MCF 10A (cell line): ENCODE measurements at regions of chr6 and their contacts with region 1.

Region 1: GRCh38 chr6:7541175-7542064 is at the start of gene DSP:
- DNase-seq: peak; percentile 86
- H3K4me3 Mint-ChIP-seq: peak within 1 kb of the TSS; percentile 98
- H3K27ac Mint-ChIP-seq: peak within 1 kb of the TSS; percentile 97
- H3K4me1 Mint-ChIP-seq: peaks cover 13% of the 10 kb centered on the region
- H3K27me3 Mint-ChIP-seq: no peaks in the 10 kb centered on the region
- CTCF ChIP-seq: no peak
- total RNA-seq, gene DSP: 163 and 227 TPM in 2 replicates

Region 2: DNA sequence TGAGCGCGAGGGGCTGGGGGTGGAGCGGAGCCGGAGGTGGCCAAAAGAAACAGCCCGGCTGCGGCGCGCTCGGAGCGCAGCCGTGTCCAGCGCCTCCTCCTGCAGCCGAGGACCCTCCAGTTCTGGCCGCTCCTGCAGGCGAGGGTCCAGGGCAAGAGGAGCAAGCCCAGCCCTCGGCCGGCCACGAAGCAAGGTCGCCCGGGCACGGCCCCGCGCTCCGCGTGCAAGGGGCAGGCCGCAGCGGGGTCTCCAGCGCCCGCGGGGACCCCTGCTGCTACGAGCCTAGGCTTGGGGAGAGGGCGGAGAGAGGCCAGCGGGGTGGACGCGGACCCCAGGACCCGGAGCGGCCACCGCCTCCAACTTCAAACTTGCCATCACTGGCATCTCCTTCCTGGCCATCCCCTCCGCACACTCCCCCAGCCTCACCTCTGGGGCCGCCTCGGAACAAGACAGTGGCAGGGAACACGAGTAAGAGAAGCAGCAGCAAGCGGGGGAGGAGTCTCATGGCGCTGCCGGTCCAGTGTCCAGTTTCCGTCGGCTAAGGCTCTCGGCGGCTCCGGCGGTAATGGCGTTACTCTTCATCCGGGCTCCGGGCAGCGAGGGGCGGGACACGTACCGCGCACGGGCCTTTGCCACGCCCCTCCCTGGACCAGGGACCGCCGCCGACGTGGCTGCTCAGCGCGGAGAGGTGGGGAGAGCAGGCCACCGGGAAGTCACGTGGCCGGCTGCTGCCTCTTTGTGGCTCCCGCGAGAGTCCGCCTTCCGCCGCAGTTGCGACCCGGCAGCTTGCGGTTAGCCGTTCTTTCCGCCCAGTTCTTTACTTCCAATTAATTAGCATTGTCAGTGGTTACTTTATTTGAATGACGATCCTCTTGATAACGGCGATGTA is 228.6 kb before region 1 on chr6 and contains the start of gene SSR1:
- CTCF ChIA-PET with region 1: no interaction called
- POLR2A ChIA-PET with region 1: interaction called, 17 read pairs
- intact Hi-C with region 1: loop called (anchors 5 kb)
- DNase-seq: peak; percentile 96
- H3K4me3 Mint-ChIP-seq: peak within 1 kb of the TSS; percentile 91
- H3K27ac Mint-ChIP-seq: peak within 1 kb of the TSS; percentile 83
- H3K4me1 Mint-ChIP-seq: peaks cover 16% of the 10 kb centered on the region
- H3K27me3 Mint-ChIP-seq: no peaks in the 10 kb centered on the region
- CTCF ChIP-seq: no peak
- total RNA-seq, gene SSR1: 318 and 396 TPM in 2 replicates

Region 3: GRCh38 chr6:7414811-7415210 is 126.6 kb before region 1 on chr6:
- CTCF ChIA-PET with region 1: no interaction called
- POLR2A ChIA-PET with region 1: interaction called, 14 read pairs
- intact Hi-C with region 1: no loop called
- DNase-seq: peak; percentile 82
- H3K4me3 Mint-ChIP-seq: peak overlapping the region; percentile 20
- H3K27ac Mint-ChIP-seq: peak overlapping the region; percentile 41
- H3K4me1 Mint-ChIP-seq: peaks cover 12% of the 10 kb centered on the region
- H3K27me3 Mint-ChIP-seq: no peaks in the 10 kb centered on the region
- CTCF ChIP-seq: no peak

Region 4: GRCh38 chr6:7446619-7447325 is 94.6 kb before region 1 on chr6:
- CTCF ChIA-PET with region 1: interaction called, 3 read pairs
- POLR2A ChIA-PET with region 1: interaction called, 10 read pairs
- intact Hi-C with region 1: no loop called
- DNase-seq: peak; percentile 60
- H3K4me3 Mint-ChIP-seq: peak overlapping the region; percentile 18
- H3K27ac Mint-ChIP-seq: peak overlapping the region; percentile 5
- H3K4me1 Mint-ChIP-seq: peaks cover 21% of the 10 kb centered on the region
- H3K27me3 Mint-ChIP-seq: no peaks in the 10 kb centered on the region
- CTCF ChIP-seq: no peak

Region 5: DNA sequence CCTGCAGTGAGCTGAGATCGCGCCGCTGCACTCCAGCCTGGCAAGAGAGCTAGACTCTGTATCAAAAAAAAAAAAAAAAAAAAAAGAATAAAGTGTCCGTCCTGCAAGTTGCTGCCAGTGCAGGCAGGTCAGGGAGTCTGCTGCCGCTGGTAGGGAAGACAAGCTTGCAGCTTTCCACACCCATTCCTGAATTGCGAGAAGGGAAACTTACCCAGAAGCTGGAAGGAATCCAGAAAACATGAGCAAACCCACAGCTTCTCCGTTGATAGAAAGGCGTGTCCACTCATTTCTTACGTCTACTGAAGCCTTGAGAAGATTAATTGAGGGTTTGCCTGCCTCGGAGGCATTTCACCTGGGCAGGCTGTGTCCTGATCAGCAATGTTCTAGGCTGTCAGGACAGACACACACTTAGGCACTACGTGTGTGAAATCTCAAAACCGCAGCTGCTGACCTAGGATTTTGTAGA is 61.6 kb before region 1 on chr6:
- CTCF ChIA-PET with region 1: no interaction called
- POLR2A ChIA-PET with region 1: interaction called, 97 read pairs
- intact Hi-C with region 1: loop called (anchors 2 kb)
- DNase-seq: peak; percentile 100
- H3K4me3 Mint-ChIP-seq: peak overlapping the region; percentile 39
- H3K27ac Mint-ChIP-seq: peak overlapping the region; percentile 89
- H3K4me1 Mint-ChIP-seq: peaks cover 11% of the 10 kb centered on the region
- H3K27me3 Mint-ChIP-seq: no peaks in the 10 kb centered on the region
- CTCF ChIP-seq: no peak

Region 6: GRCh38 chr6:7505187-7505811 is 36.1 kb before region 1 on chr6:
- CTCF ChIA-PET with region 1: interaction called, 6 read pairs
- POLR2A ChIA-PET with region 1: interaction called, 872 read pairs
- intact Hi-C with region 1: loop called (anchors 1 kb)
- DNase-seq: peak; percentile 99
- H3K4me3 Mint-ChIP-seq: peak overlapping the region; percentile 33
- H3K27ac Mint-ChIP-seq: peak overlapping the region; percentile 95
- H3K4me1 Mint-ChIP-seq: peaks cover 26% of the 10 kb centered on the region
- H3K27me3 Mint-ChIP-seq: no peaks in the 10 kb centered on the region
- CTCF ChIP-seq: no peak

Region 7: GRCh38 chr6:7561153-7561964 is 19.9 kb after region 1 on chr6:
- CTCF ChIA-PET with region 1: no interaction called
- POLR2A ChIA-PET with region 1: interaction called, 165 read pairs
- intact Hi-C with region 1: loop called (anchors 1 kb)
- DNase-seq: peak; percentile 93
- H3K4me3 Mint-ChIP-seq: peak overlapping the region; percentile 64
- H3K27ac Mint-ChIP-seq: peak overlapping the region; percentile 88
- H3K4me1 Mint-ChIP-seq: peaks cover 27% of the 10 kb centered on the region
- H3K27me3 Mint-ChIP-seq: no peaks in the 10 kb centered on the region
- CTCF ChIP-seq: no peak